OCI-LY7 (cell line): ENCODE measurements at regions of chr5 and their contacts with region 1.

Region 1: GRCh38 chr5:132495667-132496190 is 5.2 kb upstream of the IRF1 start:
- DNase-seq: peak; percentile 91
- H3K4me3 ChIP-seq: peak overlapping the region; percentile 78
- H3K27ac ChIP-seq: peak overlapping the region; percentile 50
- H3K4me1 ChIP-seq: peaks cover 63% of the 10 kb centered on the region
- CTCF ChIP-seq: peak; percentile 54

Region 2: GRCh38 chr5:132410451-132411381 is 85.0 kb before region 1 on chr5:
- CTCF ChIA-PET with region 1: interaction called, 9 read pairs
- POLR2A ChIA-PET with region 1: interaction called, 9 read pairs
- intact Hi-C with region 1: loop called (anchors 1 kb)
- DNase-seq: peak; percentile 92
- H3K4me3 ChIP-seq: peak overlapping the region; percentile 75
- H3K27ac ChIP-seq: peak overlapping the region; percentile 86
- H3K4me1 ChIP-seq: peaks cover 64% of the 10 kb centered on the region
- CTCF ChIP-seq: peak; percentile 78

Region 3: GRCh38 chr5:132419502-132420468 is 75.9 kb before region 1 on chr5:
- CTCF ChIA-PET with region 1: interaction called, 6 read pairs
- POLR2A ChIA-PET with region 1: interaction called, 35 read pairs
- intact Hi-C with region 1: loop called (anchors 1 kb)
- DNase-seq: peak; percentile 82
- H3K4me3 ChIP-seq: peak overlapping the region; percentile 62
- H3K27ac ChIP-seq: peak overlapping the region; percentile 96
- H3K4me1 ChIP-seq: peaks cover 84% of the 10 kb centered on the region
- CTCF ChIP-seq: peak; percentile 95

Region 4: GRCh38 chr5:132426525-132427138 is 69.1 kb before region 1 on chr5:
- CTCF ChIA-PET with region 1: interaction called, 6 read pairs
- POLR2A ChIA-PET with region 1: interaction called, 35 read pairs
- intact Hi-C with region 1: no loop called
- DNase-seq: peak; percentile 87
- H3K4me3 ChIP-seq: peak overlapping the region; percentile 37
- H3K27ac ChIP-seq: peak overlapping the region; percentile 96
- H3K4me1 ChIP-seq: peaks cover 100% of the 10 kb centered on the region
- CTCF ChIP-seq: peak; percentile 66

Region 5: DNA sequence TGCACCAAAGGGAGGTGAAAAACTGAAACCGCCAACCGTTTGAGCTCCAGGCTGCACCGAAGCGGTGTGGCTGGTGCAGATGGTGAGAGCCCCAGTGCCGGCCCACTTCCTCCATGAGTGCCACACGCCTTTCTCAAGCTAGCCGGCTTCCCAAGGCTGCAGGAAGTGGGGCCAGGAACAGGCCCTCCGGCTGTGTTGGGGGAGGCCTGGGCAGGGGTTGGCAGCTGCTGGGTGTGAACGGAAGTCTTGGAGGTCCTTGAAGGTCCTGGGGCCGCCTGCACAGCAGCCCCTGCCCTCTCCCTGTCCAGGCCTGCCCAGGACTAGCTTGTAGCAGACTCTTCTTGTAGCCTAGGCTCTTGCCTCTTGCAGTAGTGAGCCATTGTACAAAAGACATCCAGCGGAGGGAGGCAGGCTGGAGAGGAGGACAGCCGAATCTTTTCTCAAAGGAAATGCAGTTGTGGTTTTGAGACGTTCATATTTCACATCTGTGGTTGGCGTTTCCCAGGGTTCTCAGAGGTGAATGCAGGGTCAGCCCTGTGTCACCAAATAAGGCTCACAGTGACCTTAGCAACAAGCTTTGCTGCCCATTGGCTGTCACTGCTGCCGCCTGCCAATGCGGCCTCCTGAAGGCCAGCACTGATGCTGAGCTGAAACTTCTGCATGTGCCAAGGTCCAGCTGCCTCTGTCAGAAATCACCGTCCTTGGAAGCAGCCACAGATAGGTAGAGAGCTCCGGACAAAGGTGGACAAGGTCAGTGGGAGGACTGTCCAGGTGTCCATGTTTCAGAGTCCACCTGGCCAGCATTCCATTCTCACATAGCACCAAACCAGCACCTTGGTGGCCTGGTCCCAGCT is 29.1 kb before region 1 on chr5:
- CTCF ChIA-PET with region 1: interaction called, 5 read pairs
- POLR2A ChIA-PET with region 1: interaction called, 26 read pairs
- intact Hi-C with region 1: loop called (anchors 1 kb)
- DNase-seq: peak; percentile 84
- H3K4me3 ChIP-seq: peak overlapping the region; percentile 48
- H3K27ac ChIP-seq: peak overlapping the region; percentile 61
- H3K4me1 ChIP-seq: peaks cover 68% of the 10 kb centered on the region
- CTCF ChIP-seq: no peak

Region 6: DNA sequence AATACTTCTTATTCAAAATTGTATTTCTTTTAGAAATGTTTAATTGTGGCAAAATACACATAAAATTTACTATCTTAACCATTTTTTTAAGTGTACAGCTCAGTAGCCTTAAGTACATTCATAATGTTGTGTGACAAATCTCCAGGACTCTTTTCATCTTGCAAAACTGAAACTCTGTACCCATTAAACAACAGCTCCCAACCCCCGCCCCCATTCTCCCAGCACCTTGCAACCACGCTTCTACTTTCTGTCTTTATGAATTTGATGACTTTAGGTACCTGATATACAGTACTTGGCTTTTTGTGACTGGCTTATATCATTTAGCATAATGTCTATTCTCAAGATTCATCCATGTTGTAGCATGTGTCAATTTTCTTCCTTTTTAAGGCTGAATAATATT is 50.4 kb after region 1 on chr5:
- CTCF ChIA-PET with region 1: no interaction called
- POLR2A ChIA-PET with region 1: no interaction called
- intact Hi-C with region 1: no loop called
- DNase-seq: no peak
- H3K4me3 ChIP-seq: no peak overlapping the region
- H3K27ac ChIP-seq: no peak overlapping the region
- H3K4me1 ChIP-seq: no peaks in the 10 kb centered on the region
- CTCF ChIP-seq: no peak